Dorsolateral prefrontal cortex (tissue), 120 donors: ENCODE measurements at regions of chr7 and their contacts with region 1.

Region 1: DNA sequence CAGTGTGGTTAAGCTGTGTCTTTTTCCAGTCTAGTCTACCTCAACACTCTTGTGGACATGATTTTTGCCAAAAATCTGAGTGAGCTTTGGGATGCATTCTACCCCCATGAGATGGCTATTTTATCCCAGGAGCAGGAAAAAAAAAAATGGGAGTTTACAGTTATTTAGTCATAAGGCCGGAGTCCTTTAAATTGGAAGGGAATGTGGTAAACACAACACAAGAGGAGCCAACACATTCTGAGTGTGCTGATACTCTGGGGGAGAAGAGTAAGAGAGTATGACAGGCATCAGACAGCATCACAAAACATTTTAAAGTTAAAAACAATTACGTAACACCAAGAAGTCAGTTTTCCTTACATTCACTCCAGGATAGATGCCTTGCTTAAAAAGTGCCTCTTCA is 46.1 kb downstream of the C1GALT1 start:
- DNase-seq: no peak
- H3K4me3 ChIP-seq: peak overlapping the region in 57 of 59 donors; percentile 11 to 69 (median 45)
- H3K27ac ChIP-seq: peak overlapping the region; percentile 40 to 99 (median 93)
- H3K27me3 ChIP-seq: no peaks in the 10 kb centered on the region
- CTCF ChIP-seq: no peak

Region 2: GRCh38 chr7:7182156-7183060 is 46.1 kb before region 1 on chr7 and contains the start of gene C1GALT1:
- intact Hi-C with region 1: loop called (anchors 1 to 2 kb)
- DNase-seq: peak; percentile 91 to 98 (median 96)
- H3K4me3 ChIP-seq: peak within 1 kb of the TSS; percentile 58 to 98 (median 91)
- H3K27ac ChIP-seq: peak within 1 kb of the TSS; percentile 85 to 99 (median 98)
- H3K27me3 ChIP-seq: no peaks in the 10 kb centered on the region
- CTCF ChIP-seq: peak in 52 of 56 donors; percentile 7 to 68 (median 44)
- total RNA-seq, gene C1GALT1: 22.2 to 88.2 (median 37.1) TPM